ENCODE measurements at regions of chr7 and their contacts with region 1.

Region 1: DNA sequence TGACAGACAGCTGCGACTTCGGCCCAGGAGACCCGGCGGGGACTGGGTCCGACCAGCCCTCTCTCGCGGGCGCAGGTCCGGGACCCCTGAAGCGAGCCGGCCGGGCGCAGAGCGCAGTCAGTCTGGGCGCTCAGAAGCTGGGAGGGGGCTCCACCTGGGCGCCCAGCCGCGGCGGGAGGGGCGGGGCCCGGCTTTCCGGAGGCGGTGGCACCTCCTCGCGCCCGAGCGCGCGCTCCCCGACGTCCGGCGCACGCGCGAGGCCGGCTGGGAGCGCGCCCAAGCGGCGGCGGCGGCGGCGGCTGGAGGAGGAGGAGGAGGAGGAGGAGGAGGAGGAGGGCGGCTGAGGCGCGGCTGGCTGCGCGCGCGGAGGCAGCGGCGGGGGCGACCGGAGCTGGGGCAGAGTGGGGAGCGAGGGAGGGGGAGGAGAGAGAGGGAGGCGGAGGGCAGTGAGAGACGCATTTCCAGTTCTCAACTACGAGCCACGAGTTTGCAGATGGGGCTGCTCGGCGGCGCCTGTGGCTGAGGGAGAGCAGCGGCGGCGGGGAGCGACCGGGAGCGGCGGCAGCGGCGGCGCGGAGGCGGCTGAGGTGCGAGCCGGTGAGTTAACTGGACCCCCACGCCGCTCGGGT is at the start of gene PALS2:
- DNase-seq: peak; percentile 51 to 90
- H3K4me3 ChIP-seq: peak within 1 kb of the TSS; percentile 71
- H3K27ac ChIP-seq: peak within 1 kb of the TSS; percentile 46
- H3K4me1 ChIP-seq: peaks cover 24% of the 10 kb centered on the region
- H3K27me3 ChIP-seq: no peaks in the 10 kb centered on the region
- CTCF ChIP-seq: no peak
- total RNA-seq, gene PALS2: 35.8 and 42.4 TPM in 2 replicates

Region 2: GRCh38 chr7:23474094-23474828 is 1098.8 kb before region 1 on chr7:
- CTCF ChIA-PET with region 1: no interaction called
- POLR2A ChIA-PET with region 1: interaction called, 4 read pairs
- intact Hi-C with region 1: loop called (anchors 10 kb)
- DNase-seq: peak; percentile 96 to 99
- H3K4me3 ChIP-seq: peak overlapping the region; percentile 73
- H3K27ac ChIP-seq: peak overlapping the region; percentile 92
- H3K4me1 ChIP-seq: peaks cover 39% of the 10 kb centered on the region
- H3K27me3 ChIP-seq: no peaks in the 10 kb centered on the region
- CTCF ChIP-seq: no peak

Region 3: GRCh38 chr7:24381894-24382505 is 191.1 kb before region 1 on chr7:
- CTCF ChIA-PET with region 1: no interaction called
- POLR2A ChIA-PET with region 1: no interaction called
- intact Hi-C with region 1: loop called (anchors 5 kb)
- DNase-seq: peak in 1 of 2 experiments; percentile 54
- H3K4me3 ChIP-seq: no peak overlapping the region
- H3K27ac ChIP-seq: no peak overlapping the region
- H3K4me1 ChIP-seq: peaks cover 20% of the 10 kb centered on the region
- H3K27me3 ChIP-seq: no peaks in the 10 kb centered on the region
- CTCF ChIP-seq: peak; percentile 88

Region 4: GRCh38 chr7:24477398-24478136 is 95.5 kb before region 1 on chr7:
- CTCF ChIA-PET with region 1: interaction called, 3 read pairs
- POLR2A ChIA-PET with region 1: no interaction called
- intact Hi-C with region 1: loop called (anchors 2 kb)
- DNase-seq: peak; percentile 37 to 76
- H3K4me3 ChIP-seq: peak overlapping the region; percentile 3; the same call in 1 of the 2 replicates
- H3K27ac ChIP-seq: peak overlapping the region; percentile 61
- H3K4me1 ChIP-seq: peaks cover 19% of the 10 kb centered on the region
- H3K27me3 ChIP-seq: no peaks in the 10 kb centered on the region
- CTCF ChIP-seq: no peak

Region 5: GRCh38 chr7:24521917-24522620 is 51.0 kb before region 1 on chr7:
- CTCF ChIA-PET with region 1: no interaction called
- POLR2A ChIA-PET with region 1: no interaction called
- intact Hi-C with region 1: no loop called
- DNase-seq: no peak
- H3K4me3 ChIP-seq: no peak overlapping the region
- H3K27ac ChIP-seq: no peak overlapping the region
- H3K4me1 ChIP-seq: no peaks in the 10 kb centered on the region
- H3K27me3 ChIP-seq: no peaks in the 10 kb centered on the region
- CTCF ChIP-seq: no peak

Region 6: DNA sequence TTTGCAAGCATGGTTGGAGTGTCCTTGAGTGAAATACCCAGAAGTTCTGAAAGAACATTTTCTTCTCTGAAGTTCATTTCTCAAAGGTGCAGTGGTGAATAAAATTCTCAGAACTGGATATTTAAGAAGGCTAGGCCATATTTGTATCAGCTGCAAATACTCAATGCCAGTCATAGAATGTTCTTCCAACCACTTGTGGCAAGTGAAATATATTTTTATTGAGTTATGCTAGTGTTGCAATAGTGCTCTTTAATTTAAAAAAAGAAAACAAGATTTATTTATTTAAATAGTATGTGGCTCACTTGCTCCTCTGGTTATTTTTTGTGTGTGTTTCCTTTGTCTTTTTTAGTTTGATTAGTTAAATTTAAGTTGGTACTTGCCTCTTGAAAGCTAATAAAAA is 64.6 kb after region 1 on chr7:
- CTCF ChIA-PET with region 1: no interaction called
- POLR2A ChIA-PET with region 1: no interaction called
- intact Hi-C with region 1: no loop called
- DNase-seq: no peak
- H3K4me3 ChIP-seq: no peak overlapping the region
- H3K27ac ChIP-seq: no peak overlapping the region
- H3K4me1 ChIP-seq: no peaks in the 10 kb centered on the region
- H3K27me3 ChIP-seq: no peaks in the 10 kb centered on the region
- CTCF ChIP-seq: no peak

Region 7: DNA sequence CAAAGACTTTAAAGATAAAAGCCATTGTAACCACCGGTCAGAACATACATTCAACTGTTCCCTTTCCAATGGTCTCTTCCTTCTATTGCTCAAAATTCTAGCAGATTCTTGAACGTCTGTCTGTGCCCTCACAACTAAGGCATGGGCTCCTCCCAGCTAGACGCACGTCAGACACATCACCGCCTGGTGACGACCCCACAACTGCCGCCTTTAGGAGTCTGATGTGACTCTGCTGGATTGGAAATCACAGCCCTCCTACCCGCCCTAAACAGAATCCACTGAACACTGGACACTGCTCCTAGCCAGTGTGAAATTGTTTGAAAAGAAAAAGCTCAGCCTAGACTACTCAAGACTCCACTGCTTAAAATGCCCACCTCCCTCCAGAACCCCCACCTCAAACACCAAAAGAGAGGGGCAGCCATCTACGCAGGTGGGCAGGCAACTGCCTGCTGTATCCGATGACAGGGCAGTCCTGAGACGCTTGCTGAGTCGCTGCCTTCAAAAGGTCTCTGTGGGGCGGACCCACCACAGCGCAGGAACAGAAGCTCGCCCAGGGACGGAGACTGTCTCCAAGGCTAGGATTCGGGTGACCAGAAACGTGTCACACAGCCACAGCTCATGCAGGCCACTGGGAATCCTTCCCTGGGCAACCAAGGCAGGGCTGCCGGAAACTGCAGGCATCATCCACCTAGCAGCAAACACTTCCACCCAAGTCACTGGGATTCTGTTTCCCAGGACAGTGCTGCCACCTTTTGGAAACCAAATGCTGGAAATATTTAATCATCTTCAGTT is 149.5 kb after region 1 on chr7:
- CTCF ChIA-PET with region 1: interaction called, 3 read pairs
- POLR2A ChIA-PET with region 1: no interaction called
- intact Hi-C with region 1: loop called (anchors 5 kb)
- DNase-seq: peak in 1 of 2 experiments; percentile 28
- H3K4me3 ChIP-seq: no peak overlapping the region
- H3K27ac ChIP-seq: peak overlapping the region; percentile 31; the same call in 1 of the 2 replicates
- H3K4me1 ChIP-seq: peaks cover 26% of the 10 kb centered on the region
- H3K27me3 ChIP-seq: no peaks in the 10 kb centered on the region
- CTCF ChIP-seq: peak; percentile 59

Region 8: GRCh38 chr7:24979863-24980533 is 406.9 kb after region 1 on chr7 and contains the start of gene OSBPL3:
- CTCF ChIA-PET with region 1: no interaction called
- POLR2A ChIA-PET with region 1: interaction called, 3 read pairs
- intact Hi-C with region 1: loop called (anchors 10 kb)
- DNase-seq: peak; percentile 90 to 98
- H3K4me3 ChIP-seq: peak within 1 kb of the TSS; percentile 63
- H3K27ac ChIP-seq: peak within 1 kb of the TSS; percentile 77
- H3K4me1 ChIP-seq: peaks cover 24% of the 10 kb centered on the region
- H3K27me3 ChIP-seq: no peaks in the 10 kb centered on the region
- CTCF ChIP-seq: no peak
- total RNA-seq, gene OSBPL3: 87.6 and 88.4 TPM in 2 replicates

Measured in PC-9 (cell line).